Activated CD4-positive, alpha-beta T cell treated with anti-CD3 and anti-CD28 coated beads, Interleukin-2, amount 10 ng/mL, durations not matched to agents 7 days and 5 days (primary cell): ENCODE measurements at regions of chr1 and their contacts with region 1.

Region 1: DNA sequence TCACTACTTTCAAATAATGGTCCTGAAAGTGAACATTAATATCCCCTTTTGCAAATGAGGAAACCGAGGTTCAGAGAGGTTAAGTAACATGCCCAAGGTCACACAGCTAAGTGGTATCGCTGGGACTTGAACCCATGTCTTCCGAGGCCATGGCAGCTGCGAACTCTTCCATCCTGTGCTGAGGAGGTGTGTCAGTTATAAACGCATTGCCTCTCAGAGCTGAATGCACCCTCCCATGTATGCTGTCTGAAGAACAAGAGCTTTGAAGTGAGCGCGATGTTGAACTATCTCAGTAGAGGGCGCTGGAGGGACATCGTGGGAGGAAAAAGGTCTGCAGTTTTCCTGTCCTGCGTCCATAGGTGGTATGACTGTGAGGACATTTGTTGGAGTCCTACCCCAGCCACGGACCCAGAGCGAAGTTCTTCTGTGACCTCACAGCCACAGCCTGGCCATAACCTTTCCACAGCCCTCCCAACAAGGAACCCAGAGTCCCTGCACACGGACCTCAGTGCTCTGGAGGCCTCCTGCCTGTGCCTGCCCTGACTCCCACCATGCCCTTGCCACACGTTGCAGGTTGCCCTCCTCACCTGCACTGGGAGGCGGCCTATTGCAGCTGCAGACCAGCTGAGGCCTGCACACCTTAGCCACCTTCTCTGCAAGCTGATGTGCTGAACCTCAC is 7.5 kb downstream of the MYOC start:
- DNase-seq: peak; percentile 84
- H3K4me3 Mint-ChIP-seq: no peak overlapping the region
- H3K27ac Mint-ChIP-seq: no peak overlapping the region
- H3K4me1 Mint-ChIP-seq: peaks cover 10% of the 10 kb centered on the region
- H3K27me3 Mint-ChIP-seq: no peaks in the 10 kb centered on the region

Region 2: DNA sequence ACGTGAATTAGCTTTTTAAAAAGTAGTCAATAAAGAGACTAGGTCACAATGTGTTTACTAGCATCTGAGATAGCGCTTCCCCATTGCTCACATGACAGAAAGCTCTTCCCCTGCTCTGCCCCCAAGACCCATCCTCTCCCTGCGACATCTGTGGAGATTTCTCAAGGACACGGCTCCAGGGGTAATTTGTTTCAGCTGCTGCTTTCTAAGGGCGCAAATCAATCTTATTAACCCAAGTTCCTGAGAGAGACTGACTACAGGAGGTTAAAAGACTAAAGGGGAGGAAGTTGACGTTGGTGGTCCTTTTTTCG is 22.8 kb before region 1 on chr1 and contains the start of gene MYOCOS:
- CTCF ChIA-PET with region 1: interaction called, 10 read pairs
- POLR2A ChIA-PET with region 1: no interaction called
- DNase-seq: no peak
- H3K4me3 Mint-ChIP-seq: no peak within 1 kb of the TSS
- H3K27ac Mint-ChIP-seq: no peak within 1 kb of the TSS
- H3K4me1 Mint-ChIP-seq: no peaks in the 10 kb centered on the region
- H3K27me3 Mint-ChIP-seq: peaks cover 5% of the 10 kb centered on the region
- total RNA-seq, gene MYOCOS: 0.12 to 0.17 TPM

Region 3: DNA sequence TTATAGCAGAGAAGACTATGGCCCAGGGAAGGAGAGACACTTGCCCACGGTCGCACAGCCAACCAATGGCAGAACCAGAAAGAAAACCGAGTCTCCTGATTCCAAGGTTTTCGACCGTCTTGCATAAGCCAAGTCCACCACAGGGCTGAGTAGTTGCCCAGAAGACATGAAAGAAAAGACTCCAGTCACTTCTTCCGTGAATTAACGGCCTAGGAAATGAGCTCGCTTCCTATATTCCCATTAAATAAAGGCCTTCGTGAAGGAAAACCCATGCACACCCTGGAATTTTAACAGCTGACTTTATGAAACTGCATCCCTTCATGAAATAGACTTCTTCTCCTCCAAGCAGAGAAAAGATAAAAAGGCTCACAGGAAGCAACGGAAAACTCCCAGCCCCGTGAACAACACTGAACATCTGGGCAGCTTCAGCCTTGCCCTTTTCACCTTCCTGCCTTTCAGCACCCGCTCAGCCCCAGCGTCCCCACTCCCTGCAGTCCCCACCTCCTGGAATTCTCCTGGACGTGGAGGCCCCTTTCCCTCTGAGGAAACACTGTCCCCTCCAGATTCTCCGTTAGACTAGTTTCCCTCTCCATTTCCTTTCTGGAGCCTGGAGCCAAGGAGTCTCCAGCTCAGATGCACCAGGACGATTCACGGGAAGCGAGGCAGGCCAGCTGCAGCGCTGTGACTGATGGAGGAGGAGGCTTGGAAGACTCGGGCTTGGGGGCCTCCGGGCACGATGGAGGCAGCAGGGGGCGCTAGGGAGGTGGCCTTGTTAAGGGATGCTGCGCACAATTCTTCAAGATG is 10.2 kb after region 1 on chr1:
- CTCF ChIA-PET with region 1: interaction called, 26 read pairs
- POLR2A ChIA-PET with region 1: no interaction called
- DNase-seq: peak; percentile 68
- H3K4me3 Mint-ChIP-seq: no peak overlapping the region
- H3K27ac Mint-ChIP-seq: no peak overlapping the region
- H3K4me1 Mint-ChIP-seq: peaks cover 13% of the 10 kb centered on the region
- H3K27me3 Mint-ChIP-seq: peaks cover 19% of the 10 kb centered on the region

Region 4: DNA sequence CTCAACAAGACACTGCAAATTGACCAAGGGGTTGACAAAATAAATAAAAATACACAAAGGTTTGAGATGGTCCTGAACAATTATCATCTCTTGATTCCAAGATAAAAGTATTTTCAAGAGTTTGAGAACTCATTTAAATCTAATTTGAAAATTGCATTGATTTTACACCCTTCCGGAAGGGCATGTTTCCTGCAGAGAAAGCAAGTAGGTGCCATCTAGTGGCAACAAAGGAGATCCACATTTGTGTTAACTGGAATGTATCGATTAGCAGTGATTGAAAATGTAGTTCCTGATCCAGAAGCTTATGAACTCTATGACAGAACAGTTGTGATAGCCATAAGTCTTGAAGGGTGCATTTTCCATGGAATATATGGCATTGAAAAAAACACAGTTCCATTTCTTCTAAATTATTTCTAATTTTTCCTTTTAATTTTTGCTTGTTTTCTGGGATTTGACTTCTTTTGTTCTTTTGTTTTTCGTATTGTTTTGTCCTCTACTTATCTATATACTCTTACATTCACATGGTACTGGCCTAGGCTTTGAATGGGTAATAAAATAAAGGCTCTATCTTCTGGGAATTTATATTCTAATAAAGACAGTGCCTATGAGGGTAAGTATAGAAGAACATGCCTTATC is 340.0 kb after region 1 on chr1:
- CTCF ChIA-PET with region 1: interaction called, 33 read pairs
- POLR2A ChIA-PET with region 1: no interaction called
- DNase-seq: peak; percentile 38
- H3K4me3 Mint-ChIP-seq: no peak overlapping the region
- H3K27ac Mint-ChIP-seq: no peak overlapping the region
- H3K4me1 Mint-ChIP-seq: no peaks in the 10 kb centered on the region
- H3K27me3 Mint-ChIP-seq: peaks cover 6% of the 10 kb centered on the region

Region 5: GRCh38 chr1:172069534-172069933 is 424.6 kb after region 1 on chr1:
- CTCF ChIA-PET with region 1: no interaction called
- POLR2A ChIA-PET with region 1: no interaction called
- DNase-seq: no peak
- H3K4me3 Mint-ChIP-seq: no peak overlapping the region
- H3K27ac Mint-ChIP-seq: no peak overlapping the region
- H3K4me1 Mint-ChIP-seq: no peaks in the 10 kb centered on the region
- H3K27me3 Mint-ChIP-seq: no peaks in the 10 kb centered on the region